Activated CD4-positive, alpha-beta T cell treated with anti-CD3 and anti-CD28 coated beads for 36 hours (primary cell): ENCODE measurements at regions of chr19 and their contacts with region 1.

Region 1: GRCh38 chr19:6963937-6964336 is 57.3 kb downstream of the MBD3L2B start:
- DNase-seq: peak; percentile 68
- ATAC-seq: no peak
- H3K4me3 Mint-ChIP-seq: no peak overlapping the region
- H3K27ac Mint-ChIP-seq: no peak overlapping the region
- H3K4me1 Mint-ChIP-seq: peaks cover 2% of the 10 kb centered on the region
- H3K27me3 Mint-ChIP-seq: no peaks in the 10 kb centered on the region

Region 2: DNA sequence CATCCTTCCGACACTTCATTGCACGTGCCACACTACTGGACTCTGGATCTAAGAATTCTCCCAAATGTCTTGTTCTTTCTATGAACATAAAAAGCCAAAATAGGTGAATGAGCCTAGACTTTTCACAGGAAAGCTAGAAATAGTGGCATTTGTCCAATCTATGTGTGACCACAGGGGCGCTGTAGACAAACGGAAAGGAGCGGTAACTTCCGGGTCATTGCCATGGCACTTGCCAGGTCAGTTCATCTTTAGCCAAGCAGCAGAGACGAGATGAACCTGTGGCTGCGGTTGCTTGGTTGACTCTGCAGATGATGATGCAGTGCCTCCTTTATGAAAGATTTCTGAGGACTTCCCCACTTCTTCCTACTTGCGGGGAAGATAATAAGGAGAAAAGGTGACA is 11.0 kb before region 1 on chr19:
- CTCF ChIA-PET with region 1: interaction called, 22 read pairs
- POLR2A ChIA-PET with region 1: no interaction called
- intact Hi-C with region 1: no loop called
- DNase-seq: no peak
- ATAC-seq: no peak
- H3K4me3 Mint-ChIP-seq: no peak overlapping the region
- H3K27ac Mint-ChIP-seq: no peak overlapping the region
- H3K4me1 Mint-ChIP-seq: peaks cover 4% of the 10 kb centered on the region
- H3K27me3 Mint-ChIP-seq: no peaks in the 10 kb centered on the region

Region 3: GRCh38 chr19:6976197-6976596 is 12.3 kb after region 1 on chr19:
- CTCF ChIA-PET with region 1: interaction called, 26 read pairs
- POLR2A ChIA-PET with region 1: no interaction called
- intact Hi-C with region 1: no loop called
- DNase-seq: no peak
- ATAC-seq: no peak
- H3K4me3 Mint-ChIP-seq: no peak overlapping the region
- H3K27ac Mint-ChIP-seq: no peak overlapping the region
- H3K4me1 Mint-ChIP-seq: peaks cover 6% of the 10 kb centered on the region
- H3K27me3 Mint-ChIP-seq: no peaks in the 10 kb centered on the region

Region 4: GRCh38 chr19:6983448-6983847 is 19.5 kb after region 1 on chr19:
- CTCF ChIA-PET with region 1: interaction called, 10 read pairs
- POLR2A ChIA-PET with region 1: no interaction called
- intact Hi-C with region 1: no loop called
- DNase-seq: no peak
- ATAC-seq: no peak
- H3K4me3 Mint-ChIP-seq: no peak overlapping the region
- H3K27ac Mint-ChIP-seq: no peak overlapping the region
- H3K4me1 Mint-ChIP-seq: peaks cover 4% of the 10 kb centered on the region
- H3K27me3 Mint-ChIP-seq: no peaks in the 10 kb centered on the region

Region 5: DNA sequence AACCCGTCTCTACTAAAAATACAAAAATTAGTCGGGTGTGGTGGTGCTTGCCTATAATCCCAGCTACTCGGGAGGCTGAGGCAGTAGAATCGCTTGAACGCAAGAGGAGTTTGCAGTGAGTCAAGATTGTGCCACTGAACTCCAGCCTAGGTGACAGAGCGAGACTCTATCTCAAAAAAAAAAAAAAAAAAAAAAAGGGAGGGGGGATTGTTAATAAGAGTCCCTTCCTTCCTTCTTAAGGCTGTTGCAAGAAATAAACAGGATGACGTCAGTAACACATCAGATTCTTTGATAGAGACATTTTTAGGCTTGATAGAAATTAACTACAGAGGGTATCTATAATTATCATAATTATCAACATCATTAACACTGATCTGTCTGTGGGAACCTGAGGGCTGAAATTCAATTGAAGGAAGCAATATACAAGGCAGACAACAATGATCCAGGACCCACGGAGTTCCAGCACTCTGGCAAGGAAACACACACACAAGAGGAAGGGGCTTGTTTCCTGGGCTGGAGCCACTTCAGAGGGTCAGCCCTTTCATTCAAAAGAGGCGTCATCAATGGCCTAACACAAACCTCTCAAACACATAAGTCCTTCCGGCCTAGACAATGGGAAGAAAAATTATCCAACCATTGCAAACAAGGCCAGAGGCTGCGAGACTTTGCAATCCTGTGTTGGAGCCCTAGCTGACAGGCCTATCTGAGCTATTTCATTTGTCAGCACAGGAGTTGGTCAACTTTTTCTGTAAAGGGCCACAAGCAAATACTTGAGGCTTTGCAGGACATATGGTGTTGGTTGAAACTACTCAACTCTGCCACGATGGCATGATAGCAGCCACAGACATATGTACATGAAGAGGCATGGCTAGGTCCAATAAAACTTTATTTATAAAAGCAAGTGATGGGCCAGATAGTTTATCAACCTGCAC is 225.0 kb after region 1 on chr19:
- CTCF ChIA-PET with region 1: no interaction called
- POLR2A ChIA-PET with region 1: no interaction called
- intact Hi-C with region 1: no loop called
- DNase-seq: no peak
- ATAC-seq: no peak
- H3K4me3 Mint-ChIP-seq: no peak overlapping the region
- H3K27ac Mint-ChIP-seq: no peak overlapping the region
- H3K4me1 Mint-ChIP-seq: peaks cover 39% of the 10 kb centered on the region
- H3K27me3 Mint-ChIP-seq: peaks cover 10% of the 10 kb centered on the region

Region 6: DNA sequence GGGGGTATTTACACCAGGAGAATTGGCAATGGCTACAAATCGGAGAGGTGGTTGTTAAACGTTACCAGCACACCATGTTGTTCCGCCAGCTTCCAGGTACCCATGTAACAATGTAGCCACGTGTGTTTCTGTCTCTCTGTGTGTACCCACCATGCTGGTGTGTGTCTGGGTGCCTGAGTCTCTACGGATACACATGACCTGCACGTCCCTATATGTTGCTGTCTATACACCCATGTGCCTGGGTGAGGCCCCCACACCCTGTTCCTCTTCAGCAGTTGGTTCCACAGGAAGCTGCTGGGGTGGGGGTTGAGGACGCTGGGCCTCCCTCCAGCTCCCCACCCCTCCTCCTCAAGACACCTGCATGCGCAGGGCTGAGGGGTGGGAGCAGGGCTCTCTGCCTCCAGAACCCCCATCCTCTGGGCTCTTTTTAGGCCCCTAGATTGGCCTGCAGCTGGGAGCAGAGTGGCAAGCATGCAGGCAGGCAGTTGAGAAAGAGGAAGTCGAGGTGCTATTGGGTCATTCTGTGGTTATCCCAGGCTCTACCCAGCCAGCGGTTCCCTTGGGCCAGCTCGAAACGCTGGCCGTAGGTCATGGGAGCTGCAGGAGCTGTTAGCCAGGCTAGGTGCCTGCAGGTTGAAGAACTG is 384.8 kb after region 1 on chr19 and contains the start of gene ARHGEF18:
- CTCF ChIA-PET with region 1: no interaction called
- POLR2A ChIA-PET with region 1: no interaction called
- intact Hi-C with region 1: no loop called
- DNase-seq: peak; percentile 75
- ATAC-seq: peak; percentile 71
- H3K4me3 Mint-ChIP-seq: peak within 1 kb of the TSS; percentile 84
- H3K27ac Mint-ChIP-seq: peak within 1 kb of the TSS; percentile 90
- H3K4me1 Mint-ChIP-seq: peaks cover 60% of the 10 kb centered on the region
- H3K27me3 Mint-ChIP-seq: no peaks in the 10 kb centered on the region
- total RNA-seq, gene ARHGEF18: 36.6 to 39.3 TPM